B cell (primary cell): ENCODE measurements at regions of chr7 and their contacts with region 1.

Region 1: DNA sequence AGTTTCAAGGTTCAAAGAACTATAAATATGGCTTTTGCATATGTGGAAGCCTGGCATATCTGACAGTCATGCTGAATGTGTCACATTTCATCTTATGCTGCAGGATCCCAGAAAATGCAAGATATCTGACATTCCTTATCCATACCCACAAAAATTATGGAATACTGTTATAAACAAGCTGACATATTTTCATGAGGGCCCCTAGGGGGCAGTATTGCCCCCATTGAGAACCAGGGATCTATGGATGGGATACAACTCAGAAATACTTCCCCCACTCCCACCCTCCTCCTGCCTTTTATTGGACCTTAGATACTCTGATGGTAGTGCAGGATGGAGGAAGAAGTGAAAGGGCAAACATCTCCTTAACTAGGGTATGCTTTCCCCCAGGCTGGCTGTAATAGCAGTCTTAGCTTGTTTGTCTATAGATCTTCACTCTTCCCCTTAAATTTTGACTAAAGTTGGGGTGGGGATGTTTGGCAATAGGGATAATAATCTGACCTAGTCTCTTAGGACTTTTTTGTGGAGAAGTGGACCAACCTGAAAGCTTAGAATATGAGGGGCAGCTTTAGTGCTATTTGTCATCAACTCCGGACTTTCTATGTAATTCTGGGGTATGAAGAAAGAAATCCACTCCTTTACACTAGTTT is 3.5 kb upstream of the GNGT1 start:
- DNase-seq: peak; percentile 66
- ATAC-seq: peak; percentile 41
- H3K4me3 ChIP-seq: no peak overlapping the region
- H3K4me3 Mint-ChIP-seq: no peak overlapping the region
- H3K27ac ChIP-seq: no peak overlapping the region
- H3K27ac Mint-ChIP-seq: no peak overlapping the region
- H3K4me1 ChIP-seq: no peaks in the 10 kb centered on the region
- H3K4me1 Mint-ChIP-seq: no peaks in the 10 kb centered on the region
- H3K27me3 ChIP-seq: no peaks in the 10 kb centered on the region
- H3K27me3 Mint-ChIP-seq: peaks cover 25% of the 10 kb centered on the region
- CTCF ChIP-seq: peak; percentile 80

Region 2: DNA sequence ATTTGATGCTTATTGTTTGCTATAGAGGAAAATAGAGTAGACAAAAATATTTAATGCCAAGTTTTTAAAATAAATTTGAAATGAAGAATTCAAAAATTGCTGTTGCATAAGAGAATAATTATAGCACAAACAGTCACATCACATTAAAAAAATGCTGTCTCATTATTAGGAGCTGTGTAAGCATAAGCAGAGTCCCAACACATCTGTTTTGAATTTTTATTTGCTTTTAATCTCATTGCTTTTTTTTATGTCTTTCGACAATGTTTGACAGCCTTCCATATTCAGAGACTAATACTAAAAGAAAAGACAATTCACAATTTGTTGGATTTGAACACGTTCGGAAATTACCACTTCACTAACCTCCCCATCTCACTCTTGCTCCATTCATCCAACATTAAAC is 155.9 kb before region 1 on chr7:
- CTCF ChIA-PET with region 1: no interaction called
- POLR2A ChIA-PET with region 1: no interaction called
- intact Hi-C with region 1: no loop called
- DNase-seq: no peak
- ATAC-seq: no peak
- H3K4me3 ChIP-seq: no peak overlapping the region
- H3K4me3 Mint-ChIP-seq: no peak overlapping the region
- H3K27ac ChIP-seq: no peak overlapping the region
- H3K27ac Mint-ChIP-seq: no peak overlapping the region
- H3K4me1 ChIP-seq: no peaks in the 10 kb centered on the region
- H3K4me1 Mint-ChIP-seq: peaks cover 2% of the 10 kb centered on the region
- H3K27me3 ChIP-seq: no peaks in the 10 kb centered on the region
- H3K27me3 Mint-ChIP-seq: peaks cover 4% of the 10 kb centered on the region
- CTCF ChIP-seq: no peak

Region 3: DNA sequence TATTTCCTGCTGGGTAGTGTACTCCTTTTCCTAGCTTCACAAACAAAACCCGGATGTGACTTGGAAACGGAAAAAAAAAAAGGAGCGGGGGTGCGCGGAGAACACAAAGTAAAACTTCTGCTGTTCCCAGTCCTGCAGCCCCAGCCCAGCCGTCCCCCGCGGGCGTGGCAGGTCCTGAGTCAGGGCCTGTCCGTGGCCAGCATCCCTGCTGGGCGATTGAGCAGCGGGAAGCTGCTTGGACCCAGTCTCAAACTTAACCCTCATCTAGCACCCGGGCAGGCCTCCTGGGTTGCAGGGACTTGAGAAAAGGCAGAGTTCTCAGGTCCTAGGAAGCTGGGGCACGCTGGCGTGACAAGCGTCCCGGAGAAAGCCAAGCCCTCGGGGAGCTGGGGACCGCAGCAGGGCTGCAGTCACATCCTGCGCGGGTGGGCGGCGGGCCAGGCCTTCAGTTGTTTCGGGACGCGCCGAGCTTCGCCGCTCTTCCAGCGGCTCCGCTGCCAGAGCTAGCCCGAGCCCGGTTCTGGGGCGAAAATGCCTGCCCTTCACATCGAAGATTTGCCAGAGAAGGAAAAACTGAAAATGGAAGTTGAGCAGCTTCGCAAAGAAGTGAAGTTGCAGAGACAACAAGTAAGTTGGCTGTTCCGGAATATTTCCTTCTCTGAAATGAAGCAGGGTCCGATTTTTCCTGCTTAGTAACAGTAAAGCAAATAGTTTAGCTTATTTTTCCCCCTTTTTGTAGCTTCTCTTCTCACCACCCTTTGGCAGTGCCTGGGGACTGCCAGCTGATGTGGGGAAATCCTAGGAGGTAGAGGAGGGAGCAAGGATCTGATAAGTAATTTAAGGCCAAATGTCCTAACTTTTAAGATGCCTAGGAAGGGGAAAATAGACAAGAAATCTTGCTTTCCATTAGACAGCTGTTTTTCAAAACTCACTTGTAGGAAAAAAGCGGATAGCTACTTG is 19.0 kb after region 1 on chr7 and contains the start of gene GNG11:
- CTCF ChIA-PET with region 1: interaction called, 15 read pairs
- POLR2A ChIA-PET with region 1: no interaction called
- intact Hi-C with region 1: no loop called
- DNase-seq: peak; percentile 59
- ATAC-seq: peak; percentile 79
- H3K4me3 ChIP-seq: peak within 1 kb of the TSS; percentile 53 to 83 (median 76)
- H3K4me3 Mint-ChIP-seq: peak within 1 kb of the TSS; percentile 88
- H3K27ac ChIP-seq: peak within 1 kb of the TSS in 1 of 2 donors; percentile 73
- H3K27ac Mint-ChIP-seq: peak within 1 kb of the TSS; percentile 86
- H3K4me1 ChIP-seq: peaks cover 13 to 14% of the 10 kb centered on the region in 2 donors
- H3K4me1 Mint-ChIP-seq: peaks cover 23% of the 10 kb centered on the region
- H3K27me3 ChIP-seq: peaks cover 0 to 6% (median 0%) of the 10 kb centered on the region in 4 experiments
- H3K27me3 Mint-ChIP-seq: peaks cover 13% of the 10 kb centered on the region
- CTCF ChIP-seq: no peak
- total RNA-seq, gene GNG11: 1.6 and 1.7 TPM in 2 replicates